Panc1 (cell line): ENCODE measurements at regions of chr3 and their contacts with region 1.

Region 1: DNA sequence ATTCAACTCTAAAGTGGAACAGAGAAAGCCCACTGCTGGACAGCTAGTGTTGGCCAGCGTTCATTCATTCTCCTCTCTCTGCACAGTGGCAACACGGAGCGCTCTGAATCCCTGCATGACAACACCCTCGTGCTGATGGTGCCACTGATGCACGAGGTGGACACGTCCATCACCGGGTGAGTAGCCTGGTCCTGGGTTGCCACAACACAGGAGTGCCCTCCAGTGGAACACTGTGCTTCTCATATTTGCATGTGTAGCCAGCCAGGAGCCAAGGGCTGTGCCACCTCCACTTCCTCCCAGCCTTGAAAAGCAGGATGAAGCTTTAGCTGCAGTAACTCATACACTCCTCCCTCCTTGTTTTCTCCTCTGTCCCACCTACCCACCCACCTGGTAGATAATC is 120.0 kb upstream of the CTDSPL start:
- DNase-seq: no peak
- ATAC-seq: peak; percentile 80
- H3K4me3 ChIP-seq: no peak overlapping the region
- H3K27ac ChIP-seq: no peak overlapping the region
- H3K4me1 ChIP-seq: no peaks in the 10 kb centered on the region
- H3K27me3 ChIP-seq: no peaks in the 10 kb centered on the region; the same call in 1 of the 2 replicates
- CTCF ChIP-seq: peak; percentile 59

Region 2: DNA sequence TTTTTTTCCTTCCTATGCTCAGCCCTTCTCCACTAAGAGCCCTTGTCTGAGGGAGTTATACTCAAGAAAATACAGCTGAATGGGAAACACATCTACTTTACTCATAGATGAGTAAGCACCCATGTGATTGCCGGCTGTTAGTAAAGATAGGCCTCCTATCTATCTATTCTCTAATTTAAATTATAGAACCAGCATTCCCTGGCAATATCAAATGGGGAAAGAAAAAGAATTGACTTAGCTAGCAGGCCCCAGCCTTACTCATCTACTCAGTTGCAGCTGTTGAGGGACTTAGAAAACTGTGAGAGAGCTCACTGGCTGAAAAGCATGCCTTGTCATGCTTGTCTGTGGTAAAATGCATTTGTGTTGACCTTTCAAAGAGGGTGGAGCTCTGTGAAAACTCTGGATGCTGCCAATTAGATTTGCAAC is 450.4 kb before region 1 on chr3:
- CTCF ChIA-PET with region 1: no interaction called
- POLR2A ChIA-PET with region 1: no interaction called
- in situ Hi-C with region 1: no loop called
- intact Hi-C with region 1: no loop called
- DNase-seq: peak; percentile 22
- ATAC-seq: peak; percentile 74; the same call in 1 of the 2 replicates
- H3K4me3 ChIP-seq: no peak overlapping the region
- H3K27ac ChIP-seq: no peak overlapping the region
- H3K4me1 ChIP-seq: no peaks in the 10 kb centered on the region
- H3K27me3 ChIP-seq: no peaks in the 10 kb centered on the region
- CTCF ChIP-seq: no peak

Region 3: DNA sequence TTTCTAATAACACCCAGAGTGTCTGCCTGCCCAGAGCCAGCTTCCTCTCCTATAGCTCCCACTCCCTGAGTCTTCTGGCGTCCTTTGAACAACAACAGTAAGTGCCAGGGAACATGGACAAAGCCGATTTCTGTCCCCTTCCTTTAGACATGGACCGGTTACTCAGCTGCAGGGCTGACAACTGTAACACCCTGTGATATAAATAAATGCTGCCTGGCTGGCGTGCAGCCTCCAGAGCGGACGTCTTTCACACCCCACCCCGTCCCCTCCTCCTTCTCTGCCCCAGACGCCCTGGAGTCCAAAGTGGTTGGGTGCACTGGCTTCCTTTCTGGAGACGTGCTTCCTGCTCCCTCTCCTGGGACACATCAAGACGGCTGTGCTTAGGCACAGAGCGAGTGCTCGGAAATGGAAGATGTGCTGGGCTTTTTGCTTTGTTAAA is 285.4 kb before region 1 on chr3:
- CTCF ChIA-PET with region 1: interaction called, 3 read pairs
- POLR2A ChIA-PET with region 1: no interaction called
- in situ Hi-C with region 1: no loop called
- intact Hi-C with region 1: loop called (anchors 5 kb)
- DNase-seq: no peak
- ATAC-seq: no peak
- H3K4me3 ChIP-seq: no peak overlapping the region
- H3K27ac ChIP-seq: no peak overlapping the region
- H3K4me1 ChIP-seq: peaks cover 3% of the 10 kb centered on the region
- H3K27me3 ChIP-seq: peaks cover 11% of the 10 kb centered on the region; the same call in 1 of the 2 replicates
- CTCF ChIP-seq: no peak

Region 4: GRCh38 chr3:37779289-37780152 is 37.9 kb after region 1 on chr3:
- CTCF ChIA-PET with region 1: no interaction called
- POLR2A ChIA-PET with region 1: interaction called, 11 read pairs
- in situ Hi-C with region 1: no loop called
- intact Hi-C with region 1: no loop called
- DNase-seq: peak; percentile 51
- ATAC-seq: peak; percentile 89
- H3K4me3 ChIP-seq: no peak overlapping the region
- H3K27ac ChIP-seq: no peak overlapping the region
- H3K4me1 ChIP-seq: no peaks in the 10 kb centered on the region
- H3K27me3 ChIP-seq: no peaks in the 10 kb centered on the region; the same call in 1 of the 2 replicates
- CTCF ChIP-seq: peak; percentile 83

Region 5: GRCh38 chr3:37793889-37794591 is 52.4 kb after region 1 on chr3:
- CTCF ChIA-PET with region 1: no interaction called
- POLR2A ChIA-PET with region 1: no interaction called
- in situ Hi-C with region 1: no loop called
- intact Hi-C with region 1: no loop called
- DNase-seq: no peak
- ATAC-seq: no peak
- H3K4me3 ChIP-seq: no peak overlapping the region
- H3K27ac ChIP-seq: no peak overlapping the region
- H3K4me1 ChIP-seq: no peaks in the 10 kb centered on the region
- H3K27me3 ChIP-seq: no peaks in the 10 kb centered on the region; the same call in 1 of the 2 replicates
- CTCF ChIP-seq: no peak